Panc1 (cell line): ENCODE measurements at regions of chr10 and their contacts with region 1.

Region 1: DNA sequence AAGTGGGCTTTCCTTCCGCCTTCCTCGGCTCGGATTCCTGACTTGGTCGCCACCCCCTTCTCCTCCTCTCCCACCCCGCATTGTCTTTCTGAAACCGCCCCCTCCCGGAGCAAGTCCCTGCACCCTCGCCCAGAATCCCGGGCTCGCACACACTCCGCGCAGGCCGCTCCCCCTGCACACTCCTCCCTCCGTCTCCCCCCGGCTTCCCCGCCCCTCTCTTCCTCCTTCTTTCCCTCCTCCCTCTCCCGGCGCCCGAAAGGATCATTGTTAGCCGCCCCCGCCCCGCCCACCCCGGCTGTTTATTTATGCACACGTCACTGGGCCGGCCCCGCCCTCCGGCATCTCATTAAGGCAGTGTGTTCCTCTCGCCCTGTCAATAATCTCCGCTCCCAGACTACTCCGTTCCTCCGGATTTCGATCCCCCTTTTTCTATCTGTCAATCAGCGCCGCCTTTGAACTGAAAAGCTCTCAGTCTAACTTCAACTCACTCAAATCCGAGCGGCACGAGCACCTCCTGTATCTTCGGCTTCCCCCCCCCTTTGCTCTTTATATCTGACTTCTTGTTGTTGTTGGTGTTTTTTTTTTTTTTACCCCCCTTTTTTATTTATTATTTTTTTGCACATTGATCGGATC is at the start of gene TCF7L2:
- DNase-seq: peak; percentile 89
- ATAC-seq: peak; percentile 82
- H3K4me3 ChIP-seq: peak within 1 kb of the TSS; percentile 85 to 90
- H3K27ac ChIP-seq: peak within 1 kb of the TSS; percentile 97
- H3K4me1 ChIP-seq: peaks cover 17% of the 10 kb centered on the region
- H3K27me3 ChIP-seq: no peaks in the 10 kb centered on the region
- CTCF ChIP-seq: no peak
- total RNA-seq, gene TCF7L2: 45.2 TPM

Region 2: DNA sequence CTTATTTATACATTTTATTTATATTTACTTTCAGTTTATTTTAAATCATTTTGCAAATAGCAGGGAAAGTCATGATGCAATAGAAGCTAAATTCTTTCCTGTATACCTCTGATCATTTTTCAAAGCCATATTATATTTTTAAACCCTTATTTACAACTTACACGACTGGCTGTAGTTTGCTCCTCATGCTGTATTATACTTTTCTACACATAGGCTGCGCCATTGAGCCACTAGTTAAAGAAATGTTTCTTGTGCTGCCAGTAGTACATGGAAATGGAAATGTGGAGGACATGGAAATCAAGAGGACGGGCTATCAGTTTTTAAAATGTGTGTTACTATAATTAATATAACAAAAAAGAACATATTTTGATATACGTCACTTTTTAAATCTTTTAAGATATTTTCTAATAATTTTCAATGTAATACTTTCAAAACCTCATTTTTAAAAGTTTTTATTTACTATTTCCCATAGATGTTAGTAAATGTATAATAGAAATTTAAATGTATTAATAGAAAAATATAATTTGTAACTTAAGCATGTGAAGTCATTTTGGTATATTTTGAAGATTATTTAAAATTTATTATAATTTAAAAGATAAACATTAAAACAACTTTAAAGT is 384.4 kb before region 1 on chr10:
- CTCF ChIA-PET with region 1: no interaction called
- POLR2A ChIA-PET with region 1: no interaction called
- in situ Hi-C with region 1: no loop called
- intact Hi-C with region 1: loop called (anchors 5 kb)
- DNase-seq: peak; percentile 69
- ATAC-seq: peak; percentile 89
- H3K4me3 ChIP-seq: no peak overlapping the region
- H3K27ac ChIP-seq: no peak overlapping the region
- H3K4me1 ChIP-seq: peaks cover 14% of the 10 kb centered on the region; the same call in 1 of the 2 replicates
- H3K27me3 ChIP-seq: no peaks in the 10 kb centered on the region
- CTCF ChIP-seq: peak; percentile 85; the same call in 1 of the 2 replicates

Region 3: DNA sequence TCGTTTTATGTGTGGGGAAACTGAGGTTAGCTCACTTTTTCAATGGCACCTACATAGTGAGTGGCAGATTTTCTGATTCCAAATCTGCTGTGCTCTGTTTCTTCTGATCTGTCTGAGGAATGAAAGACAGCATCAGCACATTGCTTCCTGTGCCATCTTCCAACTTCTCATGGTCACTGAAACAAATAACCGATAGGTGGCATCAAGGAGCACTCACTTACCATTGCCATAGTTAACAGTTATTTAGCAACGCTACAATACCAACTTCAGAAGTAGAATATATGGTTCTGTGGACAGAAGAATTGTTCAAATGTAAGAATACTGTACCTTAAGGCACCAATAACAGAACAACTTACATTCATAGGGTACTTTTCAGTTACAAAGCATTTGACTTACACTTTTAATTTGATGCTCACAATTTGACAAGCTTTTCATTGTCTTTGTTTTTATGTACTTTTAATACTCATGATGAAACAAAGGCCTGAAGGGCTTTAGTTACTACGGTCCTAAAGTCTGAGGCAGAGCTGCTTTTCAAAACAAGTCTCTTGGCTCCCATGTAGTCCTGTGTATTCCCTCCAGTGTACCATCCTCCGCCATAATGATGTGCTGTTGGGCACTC is 228.8 kb before region 1 on chr10:
- CTCF ChIA-PET with region 1: no interaction called
- POLR2A ChIA-PET with region 1: no interaction called
- in situ Hi-C with region 1: no loop called
- intact Hi-C with region 1: loop called (anchors 10 kb)
- DNase-seq: peak; percentile 43
- ATAC-seq: no peak
- H3K4me3 ChIP-seq: no peak overlapping the region
- H3K27ac ChIP-seq: peak overlapping the region; percentile 52
- H3K4me1 ChIP-seq: peaks cover 16% of the 10 kb centered on the region
- H3K27me3 ChIP-seq: no peaks in the 10 kb centered on the region
- CTCF ChIP-seq: peak; percentile 78

Region 4: GRCh38 chr10:112938808-112939482 is 11.0 kb before region 1 on chr10:
- CTCF ChIA-PET with region 1: no interaction called
- POLR2A ChIA-PET with region 1: no interaction called
- in situ Hi-C with region 1: no loop called
- intact Hi-C with region 1: no loop called
- DNase-seq: no peak
- ATAC-seq: no peak
- H3K4me3 ChIP-seq: no peak overlapping the region
- H3K27ac ChIP-seq: no peak overlapping the region
- H3K4me1 ChIP-seq: no peaks in the 10 kb centered on the region
- H3K27me3 ChIP-seq: no peaks in the 10 kb centered on the region
- CTCF ChIP-seq: no peak

Region 5: GRCh38 chr10:113058523-113058961 is 108.6 kb after region 1 on chr10:
- CTCF ChIA-PET with region 1: no interaction called
- POLR2A ChIA-PET with region 1: no interaction called
- in situ Hi-C with region 1: no loop called
- intact Hi-C with region 1: loop called (anchors 5 kb)
- DNase-seq: no peak
- ATAC-seq: peak; percentile 73
- H3K4me3 ChIP-seq: peak overlapping the region; percentile 10 to 34; a peak in 3 of 4 replicates
- H3K27ac ChIP-seq: peak overlapping the region; percentile 97
- H3K4me1 ChIP-seq: peaks cover 90% of the 10 kb centered on the region
- H3K27me3 ChIP-seq: no peaks in the 10 kb centered on the region
- CTCF ChIP-seq: no peak

Region 6: GRCh38 chr10:113297226-113297625 is 347.2 kb after region 1 on chr10:
- CTCF ChIA-PET with region 1: no interaction called
- POLR2A ChIA-PET with region 1: no interaction called
- in situ Hi-C with region 1: no loop called
- intact Hi-C with region 1: no loop called
- DNase-seq: no peak
- ATAC-seq: no peak
- H3K4me3 ChIP-seq: no peak overlapping the region
- H3K27ac ChIP-seq: no peak overlapping the region
- H3K4me1 ChIP-seq: no peaks in the 10 kb centered on the region
- H3K27me3 ChIP-seq: no peaks in the 10 kb centered on the region
- CTCF ChIP-seq: no peak